Activated CD4-positive, alpha-beta T cell treated with anti-CD3 and anti-CD28 coated beads for 36 hours (primary cell): ENCODE measurements at regions of chr6 and their contacts with region 1.

Region 1: DNA sequence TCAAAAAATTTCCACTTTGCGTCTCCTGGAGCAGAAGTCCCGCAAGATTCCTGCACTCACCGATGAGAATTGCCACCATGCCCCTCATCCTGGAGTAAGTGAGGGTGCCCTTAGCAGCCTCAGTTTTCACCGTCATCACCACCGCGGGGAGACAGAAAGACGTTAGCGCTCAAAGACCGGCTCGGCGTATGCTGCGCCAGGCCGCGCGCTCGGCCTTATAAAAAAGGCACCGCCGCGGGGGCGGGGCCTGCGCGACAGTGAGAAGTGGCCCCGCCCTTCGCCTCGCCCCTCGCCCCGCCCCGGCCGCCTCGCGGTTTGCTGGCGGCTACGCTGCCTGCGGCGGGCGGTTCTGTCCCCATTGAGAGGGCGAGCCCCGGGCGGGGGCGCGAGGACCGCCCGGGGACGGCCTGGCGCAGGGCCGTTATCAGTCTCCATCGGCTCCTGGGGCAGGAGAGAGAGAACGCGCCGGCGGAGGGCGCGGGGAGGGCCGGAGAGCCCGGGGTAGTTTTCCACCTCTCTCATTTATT is 122.3 kb upstream of the SLC2A12 start:
- DNase-seq: peak; percentile 96
- ATAC-seq: peak; percentile 78
- H3K4me3 Mint-ChIP-seq: peak overlapping the region; percentile 96
- H3K27ac Mint-ChIP-seq: peak overlapping the region; percentile 94
- H3K4me1 Mint-ChIP-seq: peaks cover 64% of the 10 kb centered on the region
- H3K27me3 Mint-ChIP-seq: no peaks in the 10 kb centered on the region

Region 2: DNA sequence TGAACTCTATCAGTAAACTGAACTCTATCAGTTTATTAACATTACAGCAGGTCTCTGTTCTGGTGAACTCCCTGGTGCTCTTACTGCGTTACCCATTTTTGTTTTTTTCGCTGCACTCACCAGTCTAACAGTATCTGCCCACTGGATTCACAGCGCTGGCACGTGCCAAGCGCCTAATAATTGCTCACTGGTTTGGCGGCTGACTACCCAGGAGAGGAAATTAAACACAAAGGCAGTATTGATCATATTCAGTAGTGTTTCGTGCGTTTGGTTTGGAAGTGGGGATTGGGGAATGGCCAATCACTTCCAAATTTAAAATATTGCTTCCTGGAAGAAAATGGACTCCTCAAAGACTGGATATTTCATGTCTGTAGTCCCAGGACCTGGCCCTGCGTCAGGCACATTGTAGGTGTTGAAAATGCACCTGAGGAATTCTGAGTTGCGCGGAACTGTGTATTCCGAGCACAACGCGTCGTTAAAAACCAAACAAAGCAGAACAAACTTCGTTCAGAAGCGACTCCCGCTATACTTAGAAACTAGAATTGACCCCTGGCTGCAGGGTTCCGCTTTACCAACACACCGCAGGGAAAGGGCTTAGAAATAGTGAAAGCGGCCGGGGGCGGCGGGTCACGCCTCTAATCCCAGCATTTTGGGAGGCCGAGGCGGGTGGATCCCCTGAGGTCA is 1361.4 kb before region 1 on chr6:
- CTCF ChIA-PET with region 1: no interaction called
- POLR2A ChIA-PET with region 1: no interaction called
- intact Hi-C with region 1: loop called in 1 of 2 experiments (anchors 10 kb)
- DNase-seq: peak; percentile 64
- ATAC-seq: peak; percentile 23
- H3K4me3 Mint-ChIP-seq: peak overlapping the region; percentile 89
- H3K27ac Mint-ChIP-seq: peak overlapping the region; percentile 99
- H3K4me1 Mint-ChIP-seq: peaks cover 30% of the 10 kb centered on the region
- H3K27me3 Mint-ChIP-seq: no peaks in the 10 kb centered on the region

Region 3: DNA sequence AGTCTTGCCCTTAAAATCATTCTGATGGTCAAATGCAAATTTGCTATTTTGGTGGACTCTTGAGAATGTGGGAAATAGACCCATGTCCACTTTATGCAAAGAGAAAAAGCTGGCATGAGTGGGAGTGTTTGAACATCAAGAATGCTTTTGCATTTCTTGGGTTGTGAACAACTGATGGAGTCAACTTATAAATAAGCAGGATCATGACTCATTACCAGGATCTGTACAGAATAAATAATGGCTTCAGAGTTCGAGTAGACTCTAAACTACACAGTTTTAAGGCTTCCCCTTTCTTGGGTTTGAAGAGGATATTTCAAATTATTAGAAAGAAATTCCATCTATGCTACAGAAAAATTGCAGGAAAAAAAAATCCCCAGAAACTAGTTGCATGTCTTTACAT is 738.1 kb before region 1 on chr6:
- CTCF ChIA-PET with region 1: no interaction called
- POLR2A ChIA-PET with region 1: no interaction called
- intact Hi-C with region 1: no loop called
- DNase-seq: no peak
- ATAC-seq: no peak
- H3K4me3 Mint-ChIP-seq: no peak overlapping the region
- H3K27ac Mint-ChIP-seq: no peak overlapping the region
- H3K4me1 Mint-ChIP-seq: no peaks in the 10 kb centered on the region
- H3K27me3 Mint-ChIP-seq: no peaks in the 10 kb centered on the region

Region 4: DNA sequence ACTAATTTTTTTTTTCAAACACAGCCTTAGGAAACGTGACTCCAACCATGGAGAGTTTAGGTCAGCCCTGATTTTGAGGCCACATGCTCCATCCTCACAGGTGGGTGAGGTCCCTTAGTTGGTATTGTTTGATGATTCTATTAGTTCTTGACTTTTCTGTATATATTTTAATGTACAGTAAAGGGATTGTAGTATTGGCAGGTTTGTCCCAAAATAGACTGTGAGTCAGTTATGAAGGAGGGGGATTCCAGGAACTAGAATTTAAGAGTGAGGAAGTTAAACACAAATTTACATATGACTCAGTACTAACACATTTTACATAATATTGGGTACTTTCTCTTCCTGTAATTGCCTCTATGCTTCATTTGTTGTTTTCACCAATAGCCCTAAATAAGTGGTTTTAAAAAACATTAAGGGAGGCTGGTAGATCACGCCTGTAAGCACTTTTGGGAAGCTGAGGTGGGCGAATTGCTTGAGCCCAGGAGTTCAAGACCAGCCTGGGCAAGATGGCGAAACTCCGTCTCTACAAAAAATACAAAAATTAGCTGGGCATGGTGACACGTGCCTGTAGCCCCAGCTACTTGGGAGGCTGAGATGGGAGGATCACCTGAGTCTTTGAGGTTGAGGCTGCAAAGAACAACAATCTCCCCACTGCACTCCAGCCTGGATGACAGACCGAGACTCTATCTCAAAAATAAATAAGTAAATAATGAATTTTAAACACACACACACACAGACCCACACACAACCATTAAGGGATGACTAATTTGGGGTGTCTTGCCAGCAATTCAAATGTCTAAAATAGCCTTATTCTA is 61.4 kb after region 1 on chr6:
- CTCF ChIA-PET with region 1: no interaction called
- POLR2A ChIA-PET with region 1: no interaction called
- intact Hi-C with region 1: loop called in 1 of 2 experiments (anchors 1 kb)
- DNase-seq: peak; percentile 25
- ATAC-seq: peak; percentile 83
- H3K4me3 Mint-ChIP-seq: peak overlapping the region; percentile 35
- H3K27ac Mint-ChIP-seq: peak overlapping the region; percentile 77
- H3K4me1 Mint-ChIP-seq: peaks cover 41% of the 10 kb centered on the region
- H3K27me3 Mint-ChIP-seq: no peaks in the 10 kb centered on the region

Region 5: GRCh38 chr6:134379086-134379485 is 204.4 kb after region 1 on chr6:
- CTCF ChIA-PET with region 1: interaction called, 3 read pairs
- POLR2A ChIA-PET with region 1: no interaction called
- intact Hi-C with region 1: loop called (anchors 2 to 5 kb)
- DNase-seq: peak; percentile 73
- ATAC-seq: peak; percentile 96
- H3K4me3 Mint-ChIP-seq: no peak overlapping the region
- H3K27ac Mint-ChIP-seq: peak overlapping the region; percentile 40
- H3K4me1 Mint-ChIP-seq: peaks cover 27% of the 10 kb centered on the region
- H3K27me3 Mint-ChIP-seq: no peaks in the 10 kb centered on the region

Region 6: DNA sequence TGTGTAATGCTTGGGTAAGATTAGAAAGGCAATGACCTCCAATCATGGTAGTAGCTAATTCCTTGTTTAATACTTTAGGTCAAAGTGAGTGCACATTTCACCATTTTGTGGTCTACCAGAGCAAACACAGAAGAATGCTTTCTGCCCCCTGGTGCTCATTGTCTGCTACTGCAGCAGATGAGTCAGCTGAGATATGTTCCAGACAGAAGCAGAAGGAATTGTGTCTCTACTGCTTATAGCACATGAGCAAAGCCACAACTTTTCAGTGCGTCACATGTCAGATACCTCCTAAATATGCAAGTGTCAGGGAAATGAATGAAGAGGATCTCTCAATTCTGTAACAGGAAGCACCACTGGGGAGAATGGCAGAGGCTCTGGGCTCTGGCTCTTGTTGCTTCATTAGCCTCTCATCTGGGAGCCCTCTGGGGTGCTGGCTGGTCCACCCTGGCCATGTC is 466.3 kb after region 1 on chr6:
- CTCF ChIA-PET with region 1: interaction called, 36 read pairs
- POLR2A ChIA-PET with region 1: interaction called, 4 read pairs
- intact Hi-C with region 1: loop called (anchors 1 kb)
- DNase-seq: peak; percentile 83
- ATAC-seq: peak; percentile 88
- H3K4me3 Mint-ChIP-seq: no peak overlapping the region
- H3K27ac Mint-ChIP-seq: no peak overlapping the region
- H3K4me1 Mint-ChIP-seq: peaks cover 23% of the 10 kb centered on the region
- H3K27me3 Mint-ChIP-seq: no peaks in the 10 kb centered on the region

Region 7: DNA sequence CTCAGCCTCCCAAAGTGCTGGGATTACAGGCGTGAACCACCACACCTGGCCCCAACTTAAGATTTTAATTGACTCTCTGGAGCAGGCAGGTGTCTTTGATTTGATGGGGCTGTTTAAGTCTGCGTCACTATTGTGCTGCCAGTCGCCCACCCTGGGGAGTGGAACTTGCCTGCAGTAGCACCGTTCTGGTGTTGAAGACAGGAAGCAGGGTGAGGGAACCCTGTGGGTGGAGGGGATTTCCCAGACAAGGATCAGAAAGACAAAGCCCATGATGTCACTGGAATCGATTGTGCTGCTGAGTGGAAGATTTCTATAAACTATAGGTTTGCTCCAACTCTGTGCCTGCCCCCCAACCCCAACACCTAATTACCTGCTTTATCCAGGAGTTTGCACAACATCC is 764.2 kb after region 1 on chr6:
- CTCF ChIA-PET with region 1: interaction called, 8 read pairs
- POLR2A ChIA-PET with region 1: no interaction called
- intact Hi-C with region 1: loop called (anchors 1 kb)
- DNase-seq: peak; percentile 83
- ATAC-seq: peak; percentile 98
- H3K4me3 Mint-ChIP-seq: no peak overlapping the region
- H3K27ac Mint-ChIP-seq: peak overlapping the region; percentile 44
- H3K4me1 Mint-ChIP-seq: peaks cover 11% of the 10 kb centered on the region
- H3K27me3 Mint-ChIP-seq: no peaks in the 10 kb centered on the region

Region 8: GRCh38 chr6:135497412-135498269 is 1322.9 kb after region 1 on chr6 and contains the start of gene AHI1:
- CTCF ChIA-PET with region 1: interaction called, 3 read pairs
- POLR2A ChIA-PET with region 1: no interaction called
- intact Hi-C with region 1: loop called in 1 of 2 experiments (anchors 5 kb)
- DNase-seq: peak; percentile 94
- ATAC-seq: peak; percentile 81
- H3K4me3 Mint-ChIP-seq: no peak within 1 kb of the TSS
- H3K27ac Mint-ChIP-seq: peak within 1 kb of the TSS; percentile 94
- H3K4me1 Mint-ChIP-seq: peaks cover 7% of the 10 kb centered on the region
- H3K27me3 Mint-ChIP-seq: no peaks in the 10 kb centered on the region
- total RNA-seq, gene AHI1: 35.6 to 36.0 TPM